ENCODE measurements at regions of chr11 and their contacts with region 1.

Region 1: GRCh38 chr11:101436511-101437142 is 147.2 kb downstream of the TRPC6 start:
- DNase-seq: peak; percentile 46
- ATAC-seq: peak; percentile 76
- H3K4me3 ChIP-seq: no peak overlapping the region
- H3K27ac ChIP-seq: no peak overlapping the region
- H3K4me1 ChIP-seq: peaks cover 0 to under 1% of the 10 kb centered on the region in 2 experiments; a peak in 1 of 4 replicates
- H3K27me3 ChIP-seq: no peaks in the 10 kb centered on the region
- CTCF ChIP-seq: peak; percentile 50 to 82 (median 79)
- POLR2A ChIP-seq: no peak
- RAD21 ChIP-seq: peak; percentile 74

Region 2: DNA sequence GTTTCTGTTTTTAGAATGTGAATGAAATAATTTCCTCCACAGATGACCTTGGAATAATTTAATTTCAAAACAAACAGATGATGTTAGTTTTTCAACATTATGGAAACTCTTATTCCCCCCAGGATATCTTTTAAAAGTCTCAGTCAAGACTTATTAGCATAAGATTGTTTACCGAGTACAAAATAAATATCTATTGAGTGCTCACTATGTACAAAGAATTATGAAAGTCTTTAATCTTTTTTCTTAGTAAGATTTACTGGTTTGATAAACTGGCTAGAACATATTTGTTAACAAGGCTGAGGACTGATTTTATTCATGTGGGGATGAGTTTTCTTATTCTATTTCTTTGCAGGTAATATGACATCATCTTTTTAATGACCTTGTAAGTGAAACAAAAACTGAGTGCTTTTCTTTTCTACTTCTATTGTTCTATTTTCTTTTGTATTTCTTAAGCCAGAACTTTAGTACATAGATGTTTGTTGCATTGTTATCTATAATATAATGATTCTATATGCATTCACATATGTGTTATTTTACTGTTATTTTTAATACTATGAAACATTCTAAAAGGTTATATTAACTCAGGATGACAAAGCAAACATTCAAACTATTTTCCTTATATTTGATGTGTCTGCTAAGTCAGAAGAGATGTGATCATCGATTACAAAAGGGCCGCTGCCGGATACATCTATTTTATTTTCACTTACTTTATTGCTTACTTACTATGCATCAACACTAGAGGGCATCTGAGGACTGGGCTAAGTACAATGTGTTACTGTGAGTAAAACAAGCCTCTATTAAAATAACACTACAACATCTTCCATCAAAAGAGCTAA is 860.5 kb before region 1 on chr11:
- CTCF ChIA-PET with region 1: interaction called, 4 read pairs
- POLR2A ChIA-PET with region 1: no interaction called
- RAD21 ChIA-PET with region 1: no interaction called
- intact Hi-C with region 1: loop called (anchors 5 kb)
- DNase-seq: peak; percentile 43
- ATAC-seq: peak; percentile 84
- H3K4me3 ChIP-seq: no peak overlapping the region
- H3K27ac ChIP-seq: no peak overlapping the region
- H3K4me1 ChIP-seq: peaks cover 0 to 5% of the 10 kb centered on the region in 2 experiments; a peak in 1 of 4 replicates
- H3K27me3 ChIP-seq: 0 out of 2 replicates have a peak, but pooled peaks cover under 1% of the 10 kb centered on the region
- CTCF ChIP-seq: peak; percentile 63 to 83 (median 79)
- POLR2A ChIP-seq: no peak
- RAD21 ChIP-seq: peak; percentile 92

Region 3: DNA sequence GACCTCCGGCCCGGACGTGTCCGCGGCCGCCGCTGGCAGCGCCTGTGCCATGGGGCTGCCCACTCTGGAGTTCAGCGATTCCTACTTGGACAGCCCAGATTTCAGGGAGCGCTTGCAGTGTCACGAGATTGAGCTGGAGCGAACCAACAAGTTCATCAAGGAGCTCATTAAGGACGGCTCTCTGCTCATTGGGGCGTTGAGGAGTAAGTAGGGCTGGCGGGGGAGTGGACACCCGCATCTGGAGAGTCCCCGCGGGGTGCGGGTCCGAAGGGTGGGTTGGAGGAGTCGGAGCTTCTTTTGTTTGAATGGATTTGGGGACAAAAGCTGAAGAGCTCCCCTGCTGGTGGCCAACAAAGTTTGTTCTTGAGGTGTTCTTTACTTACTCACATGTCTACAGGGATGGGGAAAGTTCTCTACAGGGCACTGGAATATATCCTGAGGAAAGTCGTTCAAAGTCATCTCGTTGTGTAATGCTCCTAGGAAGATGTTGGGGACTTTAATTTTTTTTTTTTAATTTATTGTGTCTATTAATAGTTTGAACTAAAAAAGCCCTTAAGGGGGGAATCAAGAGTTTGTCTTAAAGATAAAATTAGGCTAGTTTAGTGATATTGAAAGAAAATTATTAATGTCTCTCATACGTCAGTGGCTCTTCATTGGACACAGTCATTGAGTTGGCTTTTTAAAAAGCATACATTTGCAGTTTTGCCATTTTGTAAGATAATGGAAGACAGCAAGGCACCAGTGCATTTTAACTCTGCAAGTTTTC is 748.8 kb before region 1 on chr11:
- CTCF ChIA-PET with region 1: no interaction called
- POLR2A ChIA-PET with region 1: no interaction called
- RAD21 ChIA-PET with region 1: no interaction called
- intact Hi-C with region 1: no loop called
- DNase-seq: peak; percentile 75
- ATAC-seq: peak; percentile 74
- H3K4me3 ChIP-seq: peak overlapping the region; percentile 74 to 78
- H3K27ac ChIP-seq: peak overlapping the region; percentile 77
- H3K4me1 ChIP-seq: peaks cover 10 to 54% of the 10 kb centered on the region in 2 experiments; a peak in 3 of 4 replicates
- H3K27me3 ChIP-seq: no peaks in the 10 kb centered on the region
- CTCF ChIP-seq: peak; percentile 35 to 73 (median 62); a peak in 5 of 6 replicates
- POLR2A ChIP-seq: peak; percentile 10
- RAD21 ChIP-seq: peak; percentile 39

Region 4: GRCh38 chr11:100980156-100980555 is 456.5 kb before region 1 on chr11:
- CTCF ChIA-PET with region 1: interaction called, 6 read pairs
- POLR2A ChIA-PET with region 1: no interaction called
- RAD21 ChIA-PET with region 1: no interaction called
- intact Hi-C with region 1: loop called (anchors 2 kb)
- DNase-seq: no peak
- ATAC-seq: no peak
- H3K4me3 ChIP-seq: no peak overlapping the region
- H3K27ac ChIP-seq: no peak overlapping the region
- H3K4me1 ChIP-seq: no peaks in the 10 kb centered on the region
- H3K27me3 ChIP-seq: no peaks in the 10 kb centered on the region
- CTCF ChIP-seq: peak; percentile 28 to 43 (median 34); a peak in 5 of 6 replicates
- POLR2A ChIP-seq: no peak
- RAD21 ChIP-seq: peak; percentile 54

Region 5: DNA sequence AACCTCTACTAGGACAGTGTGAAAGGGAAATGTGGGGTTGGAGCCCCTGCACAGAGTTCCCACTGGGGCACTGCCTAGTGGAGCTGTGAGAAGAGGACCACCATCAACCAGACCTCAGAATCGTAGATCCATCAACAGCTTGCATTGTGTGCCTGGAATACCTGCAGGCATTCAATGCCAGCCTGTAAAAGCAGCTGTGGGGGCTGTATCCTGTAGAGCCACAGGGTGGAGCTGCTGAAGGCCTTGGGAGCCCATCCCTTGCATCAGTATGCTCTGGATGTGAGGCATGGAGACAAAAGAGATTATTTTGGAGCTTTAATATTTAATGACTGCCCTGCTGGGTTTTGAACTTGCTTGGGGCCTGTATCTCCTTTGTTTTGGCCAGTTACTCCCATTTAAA is 353.3 kb before region 1 on chr11:
- CTCF ChIA-PET with region 1: no interaction called
- POLR2A ChIA-PET with region 1: no interaction called
- RAD21 ChIA-PET with region 1: no interaction called
- intact Hi-C with region 1: no loop called
- DNase-seq: no peak
- ATAC-seq: peak; percentile 63; the same call in 1 of the 2 replicates
- H3K4me3 ChIP-seq: no peak overlapping the region
- H3K27ac ChIP-seq: no peak overlapping the region
- H3K4me1 ChIP-seq: no peaks in the 10 kb centered on the region
- H3K27me3 ChIP-seq: no peaks in the 10 kb centered on the region
- CTCF ChIP-seq: peak in 2 of 3 experiments; percentile 18 to 25; a peak in 2 of 6 replicates
- POLR2A ChIP-seq: no peak
- RAD21 ChIP-seq: peak; percentile 22; the same call in 1 of the 2 replicates

Region 6: GRCh38 chr11:101390539-101390938 is 46.1 kb before region 1 on chr11:
- CTCF ChIA-PET with region 1: interaction called, 4 read pairs
- POLR2A ChIA-PET with region 1: no interaction called
- RAD21 ChIA-PET with region 1: no interaction called
- intact Hi-C with region 1: loop called (anchors 1 kb)
- DNase-seq: peak; percentile 3
- ATAC-seq: no peak
- H3K4me3 ChIP-seq: no peak overlapping the region
- H3K27ac ChIP-seq: no peak overlapping the region
- H3K4me1 ChIP-seq: no peaks in the 10 kb centered on the region
- H3K27me3 ChIP-seq: no peaks in the 10 kb centered on the region
- CTCF ChIP-seq: peak; percentile 9 to 31 (median 30); a peak in 3 of 6 replicates
- POLR2A ChIP-seq: no peak
- RAD21 ChIP-seq: peak; percentile 41; the same call in 1 of the 2 replicates